ENCODE measurements at regions of chr20 and their contacts with region 1.

Region 1: GRCh38 chr20:9978397-9979004 is 56.3 kb upstream of the ANKEF1 start:
- DNase-seq: peak in 3 of 10 donors; percentile 18 to 24 (median 18)

Region 2: GRCh38 chr20:9467995-9468394 is 510.5 kb before region 1 on chr20:
- intact Hi-C with region 1: no loop called
- DNase-seq: peak in 4 of 10 donors; percentile 10 to 21 (median 16)

Region 3: GRCh38 chr20:10090588-10091166 is 112.2 kb after region 1 on chr20:
- intact Hi-C with region 1: loop called (anchors 1 kb)
- DNase-seq: peak in 7 of 10 donors; percentile 36 to 85 (median 49)

Region 4: DNA sequence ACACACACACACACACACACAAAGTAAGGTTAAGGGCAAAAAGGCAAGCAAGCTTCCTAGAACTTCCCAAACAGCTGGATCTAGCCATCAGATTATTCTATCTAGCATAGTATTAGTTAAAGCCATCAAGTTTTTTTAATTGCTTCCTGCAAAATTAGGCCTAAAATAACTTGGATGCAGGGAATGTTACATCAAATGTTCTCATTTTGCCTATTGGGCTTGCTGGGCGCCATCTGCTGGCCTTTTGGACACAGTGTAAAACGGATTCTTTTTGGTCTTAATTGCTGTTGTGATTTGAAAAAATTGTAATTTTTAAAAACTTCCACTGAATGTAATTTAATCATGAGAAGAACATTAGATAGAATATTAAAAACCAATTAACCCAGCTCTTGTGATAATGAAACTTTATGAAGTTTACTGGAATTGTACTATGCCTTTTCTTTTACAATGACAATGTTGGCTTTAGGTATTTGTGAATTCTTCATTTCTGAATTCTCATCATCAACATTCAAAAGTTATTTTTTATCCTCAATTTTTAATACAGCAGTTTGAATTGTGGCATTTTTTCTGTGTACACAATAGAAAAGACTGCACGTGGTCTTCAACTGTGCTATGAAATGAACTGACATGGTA is 448.7 kb after region 1 on chr20:
- intact Hi-C with region 1: loop called (anchors 1 kb)
- DNase-seq: peak in 9 of 10 donors; percentile 35 to 93 (median 59)

Measured in posterior cingulate gyrus (tissue), 11 donors.